Activated B cell treated with CpG ODN at 0.5 μM for 24 hours (primary cell): ENCODE measurements at regions of chr5 and their contacts with region 1.

Region 1: GRCh38 chr5:56763711-56764466 is 51.5 kb upstream of the MAP3K1 start:
- DNase-seq: peak; percentile 35
- ATAC-seq: peak; percentile 91
- H3K4me3 Mint-ChIP-seq: peak overlapping the region; percentile 38
- H3K27ac Mint-ChIP-seq: peak overlapping the region; percentile 78
- H3K4me1 Mint-ChIP-seq: peaks cover 78% of the 10 kb centered on the region
- H3K27me3 Mint-ChIP-seq: no peaks in the 10 kb centered on the region
- CTCF ChIP-seq: no peak

Region 2: GRCh38 chr5:56588636-56589480 is 175.0 kb before region 1 on chr5:
- CTCF ChIA-PET with region 1: no interaction called
- POLR2A ChIA-PET with region 1: interaction called, 3 read pairs
- intact Hi-C with region 1: loop called (anchors 5 kb)
- DNase-seq: peak; percentile 69
- ATAC-seq: peak; percentile 86
- H3K4me3 Mint-ChIP-seq: peak overlapping the region; percentile 64
- H3K27ac Mint-ChIP-seq: peak overlapping the region; percentile 97
- H3K4me1 Mint-ChIP-seq: peaks cover 69% of the 10 kb centered on the region
- H3K27me3 Mint-ChIP-seq: no peaks in the 10 kb centered on the region
- CTCF ChIP-seq: no peak

Region 3: DNA sequence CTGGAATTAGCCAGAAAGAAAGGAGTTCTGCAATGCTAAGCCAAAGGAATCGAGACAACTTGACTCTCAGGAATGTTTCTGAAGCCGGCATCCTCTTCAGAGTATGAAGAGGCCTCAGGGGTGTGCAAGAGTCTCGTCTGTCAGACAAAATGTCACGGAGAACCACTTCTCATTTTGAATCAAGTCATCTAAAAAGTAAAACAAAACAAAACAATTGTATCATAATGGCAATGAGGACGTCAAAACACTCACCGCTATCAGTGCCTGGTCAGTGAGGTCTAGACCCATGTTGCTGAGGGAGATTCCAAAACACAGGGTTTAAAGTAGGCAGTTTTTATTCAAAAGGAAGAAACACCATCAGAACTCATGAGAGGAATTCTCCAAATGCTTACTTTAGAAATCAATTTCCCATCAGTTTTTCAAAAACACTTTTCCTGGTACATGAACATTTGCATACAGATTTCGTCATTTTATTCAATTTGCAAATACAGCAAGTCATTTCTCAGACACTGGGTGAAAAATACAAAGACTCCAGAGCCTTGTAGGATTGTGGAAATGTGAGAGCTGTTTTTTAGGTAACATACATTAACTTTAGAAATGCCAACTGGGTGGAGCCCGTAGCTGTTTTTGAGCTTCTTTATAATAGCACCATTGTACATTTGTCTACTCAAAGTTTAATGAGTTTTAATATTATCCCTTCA is 38.0 kb before region 1 on chr5:
- CTCF ChIA-PET with region 1: no interaction called
- POLR2A ChIA-PET with region 1: interaction called, 8 read pairs
- intact Hi-C with region 1: loop called (anchors 5 kb)
- DNase-seq: no peak
- ATAC-seq: no peak
- H3K4me3 Mint-ChIP-seq: peak overlapping the region; percentile 19
- H3K27ac Mint-ChIP-seq: peak overlapping the region; percentile 71
- H3K4me1 Mint-ChIP-seq: peaks cover 32% of the 10 kb centered on the region
- H3K27me3 Mint-ChIP-seq: no peaks in the 10 kb centered on the region
- CTCF ChIP-seq: no peak

Region 4: GRCh38 chr5:56737002-56737621 is 26.8 kb before region 1 on chr5:
- CTCF ChIA-PET with region 1: interaction called, 4 read pairs
- POLR2A ChIA-PET with region 1: interaction called, 3 read pairs
- intact Hi-C with region 1: loop called (anchors 2 kb)
- DNase-seq: no peak
- ATAC-seq: peak; percentile 29
- H3K4me3 Mint-ChIP-seq: peak overlapping the region; percentile 25
- H3K27ac Mint-ChIP-seq: peak overlapping the region; percentile 83
- H3K4me1 Mint-ChIP-seq: peaks cover 62% of the 10 kb centered on the region
- H3K27me3 Mint-ChIP-seq: no peaks in the 10 kb centered on the region
- CTCF ChIP-seq: no peak

Region 5: DNA sequence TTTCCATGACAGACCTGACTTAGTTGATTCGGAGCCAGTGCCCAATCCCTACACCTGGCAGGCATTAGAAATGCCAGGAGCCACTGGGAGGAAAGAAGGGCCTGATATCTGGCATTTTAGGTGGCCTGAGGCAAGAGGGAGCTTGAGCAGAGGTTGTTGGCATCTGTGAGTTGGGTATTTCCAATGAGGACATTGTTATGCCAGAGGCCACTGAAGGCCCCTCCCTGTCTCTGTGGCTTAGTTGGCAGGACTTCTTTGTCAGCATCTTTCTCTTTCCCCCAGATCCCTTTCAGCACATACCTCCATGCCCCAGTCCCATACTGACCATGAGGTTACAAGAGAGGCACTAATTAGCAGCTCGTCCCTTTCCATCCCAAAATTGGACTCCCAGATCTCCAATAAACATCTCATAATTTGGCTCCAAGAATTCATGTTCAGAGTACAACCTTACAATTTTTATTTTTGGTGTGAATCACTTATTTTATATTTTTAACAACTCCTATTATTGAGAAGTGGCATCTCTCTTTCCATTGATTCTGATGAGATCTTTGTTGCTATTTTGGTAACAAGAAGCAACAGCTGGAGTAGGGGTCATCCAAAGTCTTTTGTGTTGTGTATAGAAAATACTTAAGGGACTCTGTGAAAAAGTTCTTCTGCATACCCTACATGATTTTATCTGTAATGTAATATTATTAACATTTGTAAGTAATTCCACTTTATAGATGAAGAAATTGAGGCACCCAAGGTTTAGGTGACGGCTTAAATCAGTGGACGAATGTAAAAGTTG is 17.1 kb before region 1 on chr5:
- CTCF ChIA-PET with region 1: no interaction called
- POLR2A ChIA-PET with region 1: no interaction called
- intact Hi-C with region 1: loop called (anchors 2 kb)
- DNase-seq: no peak
- ATAC-seq: no peak
- H3K4me3 Mint-ChIP-seq: no peak overlapping the region
- H3K27ac Mint-ChIP-seq: peak overlapping the region; percentile 77
- H3K4me1 Mint-ChIP-seq: peaks cover 44% of the 10 kb centered on the region
- H3K27me3 Mint-ChIP-seq: no peaks in the 10 kb centered on the region
- CTCF ChIP-seq: no peak

Region 6: DNA sequence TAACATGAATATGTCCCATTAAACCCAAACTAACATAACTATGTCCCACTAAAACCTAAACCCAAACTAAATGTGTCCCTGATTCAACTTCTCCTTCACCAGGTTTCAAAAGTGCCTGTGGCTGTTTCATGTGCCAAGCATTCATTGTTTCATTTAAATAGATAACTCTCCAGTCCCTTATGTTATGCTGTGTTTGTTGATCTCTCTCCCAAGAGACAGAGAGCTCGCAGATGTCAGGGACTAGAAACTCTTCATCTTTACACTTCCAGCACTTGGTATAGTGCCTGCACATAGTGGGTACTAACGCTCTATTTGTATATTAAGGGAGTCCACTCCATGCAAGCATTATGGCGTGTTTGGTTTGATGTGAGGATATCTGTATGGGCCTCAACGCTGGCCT is 528.0 kb after region 1 on chr5:
- CTCF ChIA-PET with region 1: no interaction called
- POLR2A ChIA-PET with region 1: no interaction called
- intact Hi-C with region 1: no loop called
- DNase-seq: no peak
- ATAC-seq: no peak
- H3K4me3 Mint-ChIP-seq: no peak overlapping the region
- H3K27ac Mint-ChIP-seq: no peak overlapping the region
- H3K4me1 Mint-ChIP-seq: no peaks in the 10 kb centered on the region
- H3K27me3 Mint-ChIP-seq: peaks cover 5% of the 10 kb centered on the region
- CTCF ChIP-seq: no peak